Activated CD4-positive, alpha-beta T cell treated with anti-CD3 and anti-CD28 coated beads, Interleukin-2, amount 10 ng/mL, durations not matched to agents 24 days and 14 days (primary cell): ENCODE measurements at regions of chr13 and their contacts with region 1.

Region 1: GRCh38 chr13:102845630-102846260 is at the start of gene ERCC5:
- DNase-seq: peak; percentile 99
- H3K4me3 Mint-ChIP-seq: peak within 1 kb of the TSS; percentile 99
- H3K27ac Mint-ChIP-seq: peak within 1 kb of the TSS; percentile 99
- H3K4me1 Mint-ChIP-seq: peaks cover 35% of the 10 kb centered on the region
- H3K27me3 Mint-ChIP-seq: peaks cover 3% of the 10 kb centered on the region
- total RNA-seq, gene ERCC5: 39.4 and 47.4 TPM in 2 replicates

Region 2: DNA sequence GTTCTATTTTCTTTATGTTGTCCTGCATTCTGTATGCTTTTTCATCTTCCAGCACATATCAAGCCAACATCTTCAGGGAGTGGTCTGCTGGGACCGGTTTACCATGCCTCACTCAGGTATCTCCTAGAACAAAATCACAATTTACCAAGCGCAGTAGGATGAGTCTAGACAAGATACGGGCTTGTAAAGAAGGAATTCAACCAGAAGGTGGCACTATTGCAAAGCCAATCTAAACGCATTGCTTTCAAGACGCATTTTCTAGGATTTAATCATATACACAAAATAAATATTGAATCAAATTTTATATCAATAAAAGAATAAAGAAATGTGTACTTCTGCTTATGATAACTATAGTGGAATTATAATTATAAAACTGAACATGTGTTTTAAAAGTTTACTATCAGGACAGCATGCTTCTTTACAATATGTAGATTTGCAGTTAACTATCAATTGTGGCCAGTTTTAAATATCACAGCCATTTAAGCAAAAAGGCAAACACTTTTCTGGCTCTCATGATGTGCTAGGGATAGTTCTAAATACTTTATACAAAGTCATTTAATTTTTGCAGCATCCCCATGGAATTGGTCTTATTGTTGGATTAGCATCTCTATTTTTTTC is 265.1 kb before region 1 on chr13:
- intact Hi-C with region 1: loop called (anchors 1 kb)
- DNase-seq: peak; percentile 85
- H3K4me3 Mint-ChIP-seq: no peak overlapping the region
- H3K27ac Mint-ChIP-seq: no peak overlapping the region
- H3K4me1 Mint-ChIP-seq: peaks cover 9% of the 10 kb centered on the region
- H3K27me3 Mint-ChIP-seq: peaks cover 16% of the 10 kb centered on the region

Region 3: GRCh38 chr13:102651892-102652291 is 193.9 kb before region 1 on chr13:
- intact Hi-C with region 1: loop called (anchors 5 kb)
- DNase-seq: no peak
- H3K4me3 Mint-ChIP-seq: no peak overlapping the region
- H3K27ac Mint-ChIP-seq: no peak overlapping the region
- H3K4me1 Mint-ChIP-seq: peaks cover 5% of the 10 kb centered on the region
- H3K27me3 Mint-ChIP-seq: no peaks in the 10 kb centered on the region

Region 4: GRCh38 chr13:102724923-102725322 is 120.8 kb before region 1 on chr13:
- intact Hi-C with region 1: loop called (anchors 1 kb)
- DNase-seq: peak; percentile 65
- H3K4me3 Mint-ChIP-seq: no peak overlapping the region
- H3K27ac Mint-ChIP-seq: no peak overlapping the region
- H3K4me1 Mint-ChIP-seq: peaks cover 3% of the 10 kb centered on the region
- H3K27me3 Mint-ChIP-seq: peaks cover 30% of the 10 kb centered on the region

Region 5: GRCh38 chr13:102779436-102780159 is 66.1 kb before region 1 on chr13:
- intact Hi-C with region 1: loop called (anchors 1 kb)
- DNase-seq: peak; percentile 82
- H3K4me3 Mint-ChIP-seq: peak overlapping the region; percentile 53
- H3K27ac Mint-ChIP-seq: peak overlapping the region; percentile 92
- H3K4me1 Mint-ChIP-seq: peaks cover 29% of the 10 kb centered on the region
- H3K27me3 Mint-ChIP-seq: no peaks in the 10 kb centered on the region

Region 6: GRCh38 chr13:102892503-102892902 is 46.8 kb after region 1 on chr13:
- intact Hi-C with region 1: no loop called
- DNase-seq: no peak
- H3K4me3 Mint-ChIP-seq: no peak overlapping the region
- H3K27ac Mint-ChIP-seq: no peak overlapping the region
- H3K4me1 Mint-ChIP-seq: no peaks in the 10 kb centered on the region
- H3K27me3 Mint-ChIP-seq: no peaks in the 10 kb centered on the region